ENCODE measurements at regions of chr11 and their contacts with region 1.

Region 1: DNA sequence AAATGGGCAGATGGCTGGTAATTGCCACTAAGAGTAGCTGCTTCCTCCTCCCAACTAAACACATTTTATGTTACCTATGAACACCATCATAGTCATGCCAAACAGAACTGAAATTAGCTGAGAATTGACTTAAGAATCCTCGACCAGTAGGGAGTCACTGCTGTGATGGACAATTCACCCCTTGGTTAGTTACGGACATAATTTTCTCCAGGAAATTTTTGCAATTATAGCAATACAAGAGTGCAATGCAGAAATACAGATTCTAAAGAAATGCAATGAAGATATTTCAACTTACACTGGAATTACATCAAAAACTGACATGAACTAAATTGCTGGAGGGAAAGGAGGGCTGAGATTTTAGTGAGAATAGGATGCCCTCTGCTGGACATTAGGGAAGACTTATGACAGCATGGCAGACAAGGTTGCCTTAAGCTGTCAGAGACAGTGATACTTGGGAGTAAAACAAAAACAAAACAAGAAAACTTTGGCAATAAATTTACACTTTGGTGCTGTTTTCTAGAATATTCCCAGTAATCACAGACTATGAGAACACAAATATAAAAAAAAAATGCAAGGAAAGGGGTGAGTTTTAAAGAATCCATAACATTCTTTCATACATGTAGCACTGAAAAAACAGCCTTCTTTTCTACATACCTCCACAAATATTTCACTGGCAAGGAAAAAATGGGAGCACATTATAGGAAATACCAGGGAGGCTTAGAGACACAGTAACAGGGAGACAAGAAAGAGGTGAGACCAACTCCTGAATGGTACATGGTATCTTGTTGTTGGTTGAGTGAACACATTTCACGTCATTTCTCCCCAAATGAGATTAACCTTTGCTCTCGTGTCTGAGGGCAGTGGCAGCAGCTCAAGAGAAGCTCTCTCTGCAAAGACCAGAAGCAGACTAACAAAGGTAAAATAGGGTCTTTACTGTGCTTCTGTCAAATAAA is 11.2 kb upstream of the PPP2R1B start:
- DNase-seq: peak; percentile 54
- ATAC-seq: peak; percentile 96
- H3K4me3 Mint-ChIP-seq: no peak overlapping the region
- H3K27ac Mint-ChIP-seq: no peak overlapping the region
- H3K4me1 Mint-ChIP-seq: no peaks in the 10 kb centered on the region
- H3K27me3 Mint-ChIP-seq: no peaks in the 10 kb centered on the region

Region 2: GRCh38 chr11:111586388-111586831 is 191.0 kb before region 1 on chr11:
- CTCF ChIA-PET with region 1: interaction called, 58 read pairs
- POLR2A ChIA-PET with region 1: no interaction called
- DNase-seq: peak; percentile 70
- ATAC-seq: peak; percentile 63
- H3K4me3 Mint-ChIP-seq: no peak overlapping the region
- H3K27ac Mint-ChIP-seq: no peak overlapping the region
- H3K4me1 Mint-ChIP-seq: peaks cover 7% of the 10 kb centered on the region
- H3K27me3 Mint-ChIP-seq: peaks cover 14% of the 10 kb centered on the region

Region 3: DNA sequence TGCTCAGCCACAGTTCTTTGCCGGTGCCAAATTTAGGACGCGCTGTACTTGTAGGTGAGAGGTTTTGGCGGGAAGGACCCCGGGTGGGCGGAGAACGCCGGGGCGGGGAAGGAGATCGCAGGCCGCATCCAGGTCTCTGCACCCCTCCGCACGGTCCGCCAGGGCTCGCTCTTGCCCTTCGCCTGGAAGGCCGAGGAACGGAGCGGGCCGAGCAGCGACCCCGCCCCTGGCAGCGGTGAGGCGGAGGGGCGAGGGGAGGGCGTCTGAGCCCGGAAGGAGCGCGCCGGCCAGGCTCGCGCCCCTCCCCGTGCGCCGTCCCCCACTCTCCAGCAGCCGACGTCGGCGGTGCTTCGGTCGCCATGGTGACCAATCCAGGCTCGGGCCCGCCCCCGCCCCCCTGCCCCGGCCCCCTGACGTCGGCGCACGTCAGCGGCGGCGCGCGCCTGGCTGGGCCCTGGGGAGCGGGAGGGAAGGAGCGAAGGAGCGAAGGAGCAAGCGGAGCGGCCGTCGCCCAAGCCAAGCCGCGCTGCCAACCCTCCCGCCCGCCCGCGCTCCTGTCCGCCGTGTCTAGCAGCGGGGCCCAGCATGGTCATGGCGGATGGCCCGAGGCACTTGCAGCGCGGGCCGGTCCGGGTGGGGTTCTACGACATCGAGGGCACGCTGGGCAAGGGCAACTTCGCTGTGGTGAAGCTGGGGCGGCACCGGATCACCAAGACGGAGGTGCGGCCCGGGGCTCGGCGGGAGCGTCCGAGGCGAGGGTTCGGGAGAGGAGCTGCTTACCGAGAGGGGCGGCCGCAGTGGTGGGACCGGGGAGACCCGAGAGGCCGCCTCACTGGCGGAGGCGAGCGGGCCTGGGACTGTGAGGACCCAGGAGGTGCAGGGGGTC is 175.1 kb before region 1 on chr11 and contains the start of gene SIK2:
- CTCF ChIA-PET with region 1: interaction called, 47 read pairs
- POLR2A ChIA-PET with region 1: no interaction called
- DNase-seq: peak; percentile 94
- ATAC-seq: peak; percentile 92
- H3K4me3 Mint-ChIP-seq: peak within 1 kb of the TSS; percentile 95
- H3K27ac Mint-ChIP-seq: peak within 1 kb of the TSS; percentile 89
- H3K4me1 Mint-ChIP-seq: peaks cover 29% of the 10 kb centered on the region
- H3K27me3 Mint-ChIP-seq: peaks cover 4% of the 10 kb centered on the region
- total RNA-seq, gene SIK2: 8.9 to 10.2 TPM

Region 4: DNA sequence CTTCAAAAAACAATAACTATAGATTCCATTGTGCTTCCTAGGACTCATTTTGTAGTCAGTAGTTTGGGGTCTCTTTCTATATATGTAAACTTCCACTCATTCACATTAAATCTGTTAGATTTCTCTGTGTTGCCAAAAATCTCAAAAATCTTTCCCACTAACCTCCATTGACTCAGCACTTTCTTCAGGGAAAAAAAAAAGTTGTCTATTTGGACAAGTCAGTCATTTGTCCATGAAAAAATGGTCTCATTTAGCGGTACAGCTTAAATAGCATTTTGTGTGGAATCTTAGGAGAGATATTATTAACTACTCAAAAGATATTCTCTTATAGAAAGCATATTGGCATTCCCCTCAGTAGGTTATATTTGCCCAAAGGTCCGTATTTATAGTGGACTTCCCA is 93.1 kb before region 1 on chr11:
- CTCF ChIA-PET with region 1: no interaction called
- POLR2A ChIA-PET with region 1: no interaction called
- DNase-seq: no peak
- ATAC-seq: no peak
- H3K4me3 Mint-ChIP-seq: no peak overlapping the region
- H3K27ac Mint-ChIP-seq: no peak overlapping the region
- H3K4me1 Mint-ChIP-seq: no peaks in the 10 kb centered on the region
- H3K27me3 Mint-ChIP-seq: no peaks in the 10 kb centered on the region

Region 5: GRCh38 chr11:111766093-111766833 is 11.1 kb before region 1 on chr11 and contains the start of gene PPP2R1B:
- CTCF ChIA-PET with region 1: interaction called, 118 read pairs
- POLR2A ChIA-PET with region 1: interaction called, 6 read pairs
- DNase-seq: peak; percentile 79
- ATAC-seq: peak; percentile 96
- H3K4me3 Mint-ChIP-seq: peak within 1 kb of the TSS; percentile 99
- H3K27ac Mint-ChIP-seq: peak within 1 kb of the TSS; percentile 98
- H3K4me1 Mint-ChIP-seq: peaks cover 27% of the 10 kb centered on the region
- H3K27me3 Mint-ChIP-seq: no peaks in the 10 kb centered on the region
- total RNA-seq, gene PPP2R1B: 56.4 to 57.7 TPM

Region 6: GRCh38 chr11:111797145-111797581 is 19.8 kb after region 1 on chr11:
- CTCF ChIA-PET with region 1: interaction called, 26 read pairs
- POLR2A ChIA-PET with region 1: interaction called, 3 read pairs
- DNase-seq: no peak
- ATAC-seq: no peak
- H3K4me3 Mint-ChIP-seq: no peak overlapping the region
- H3K27ac Mint-ChIP-seq: no peak overlapping the region
- H3K4me1 Mint-ChIP-seq: peaks cover 9% of the 10 kb centered on the region
- H3K27me3 Mint-ChIP-seq: no peaks in the 10 kb centered on the region

Region 7: GRCh38 chr11:111841370-111842053 is 64.1 kb after region 1 on chr11:
- CTCF ChIA-PET with region 1: interaction called, 37 read pairs
- POLR2A ChIA-PET with region 1: no interaction called
- DNase-seq: peak; percentile 93
- ATAC-seq: peak; percentile 89
- H3K4me3 Mint-ChIP-seq: no peak overlapping the region
- H3K27ac Mint-ChIP-seq: no peak overlapping the region
- H3K4me1 Mint-ChIP-seq: peaks cover 14% of the 10 kb centered on the region
- H3K27me3 Mint-ChIP-seq: no peaks in the 10 kb centered on the region